K562 (cell line): ENCODE measurements at regions of chr1 and their contacts with region 1.

Region 1: DNA sequence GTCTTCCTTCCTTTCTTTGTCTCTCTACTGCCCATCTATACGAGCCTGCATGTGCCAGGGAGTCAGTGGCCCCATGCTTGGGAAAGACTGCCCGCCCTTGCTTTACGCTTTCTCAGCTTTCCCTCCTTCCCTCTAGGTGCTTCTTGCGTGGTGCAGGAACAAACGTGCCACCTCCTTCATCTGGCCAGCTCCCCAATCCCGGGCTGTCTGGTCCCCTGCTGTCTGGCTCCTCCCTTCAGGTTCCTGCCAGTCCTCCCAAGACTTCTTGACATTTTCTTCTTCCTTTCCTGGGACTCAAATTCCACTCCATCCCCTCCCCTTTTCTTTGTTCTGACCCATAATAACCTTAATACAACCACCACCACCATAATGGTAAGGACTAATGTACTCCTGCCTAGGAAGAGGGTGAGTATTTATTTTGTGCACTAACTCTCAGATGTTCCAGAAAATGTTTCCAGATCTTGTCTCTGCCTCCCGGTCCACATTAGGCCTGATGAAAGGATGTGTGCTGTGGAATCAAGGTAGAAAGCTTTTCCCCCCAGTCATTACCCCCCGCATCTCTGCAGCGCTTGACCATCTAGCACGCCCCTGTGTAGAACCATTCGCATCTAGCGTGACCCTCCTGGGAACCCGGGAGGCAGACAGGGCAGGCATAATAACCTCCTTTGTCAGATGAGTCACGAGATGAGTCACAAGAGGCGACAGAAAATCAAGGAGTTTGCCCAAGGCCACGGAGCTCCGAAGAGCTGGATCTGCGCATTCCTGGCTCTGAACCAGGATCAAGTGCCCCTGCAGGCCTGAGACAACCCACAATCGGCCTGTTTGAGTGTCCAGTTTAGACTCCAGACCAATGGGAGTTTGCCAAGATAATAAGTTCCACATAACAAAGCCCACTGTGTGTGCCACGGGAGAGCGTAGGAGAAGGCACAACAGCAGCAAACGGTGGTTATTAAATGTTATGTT is 60.1 kb upstream of the NEK2 start:
- DNase-seq: peak; percentile 64 to 72 (median 66)
- ATAC-seq: peak; percentile 70
- H3K4me3 ChIP-seq: no peak overlapping the region
- H3K27ac ChIP-seq: no peak overlapping the region
- H3K4me1 ChIP-seq: peaks cover 15 to 31% of the 10 kb centered on the region in 2 experiments
- H3K27me3 ChIP-seq: no peaks in the 10 kb centered on the region
- CTCF ChIP-seq: no peak
- EP300 ChIP-seq: no peak
- POLR2A ChIP-seq: no peak
- RAD21 ChIP-seq: no peak

Region 2: DNA sequence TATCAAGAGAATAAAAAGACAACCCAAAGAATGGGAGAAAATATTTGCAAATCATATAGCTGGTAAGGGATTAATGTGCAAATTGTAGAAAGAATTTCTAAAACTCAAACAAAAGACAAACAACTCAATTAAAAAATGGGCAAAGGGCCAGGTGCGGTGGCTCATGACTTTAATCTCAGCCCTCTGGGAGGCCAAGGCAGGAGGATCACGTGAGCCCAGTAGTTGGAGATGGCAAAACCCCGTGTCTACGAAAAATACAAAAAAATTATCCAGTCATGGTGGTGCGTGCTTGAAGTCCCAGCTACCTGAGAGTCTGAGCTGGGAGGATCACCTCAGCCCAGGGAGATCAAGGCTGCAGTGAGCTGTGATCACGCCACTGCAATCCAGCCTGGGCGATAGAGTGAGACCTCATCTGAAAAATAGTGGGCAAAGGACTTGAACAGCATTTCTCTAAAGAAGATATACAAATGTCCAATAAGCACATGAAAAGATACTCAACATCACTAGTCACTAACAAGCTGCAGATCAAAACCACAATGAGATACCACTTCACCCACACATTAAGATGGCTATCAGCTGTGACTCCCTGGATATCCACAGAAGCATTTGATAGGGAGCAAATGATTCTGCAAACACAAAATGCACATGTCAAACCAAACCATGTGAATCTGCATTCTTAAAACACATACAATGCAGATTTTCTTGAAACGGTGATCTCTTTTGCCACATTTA is 177.4 kb before region 1 on chr1:
- CTCF ChIA-PET with region 1: no interaction called
- POLR2A ChIA-PET with region 1: no interaction called
- in situ Hi-C with region 1: no loop called
- intact Hi-C with region 1: no loop called
- DNase-seq: peak in 1 of 4 experiments; percentile 51
- ATAC-seq: peak; percentile 11; the same call in 1 of the 3 replicates
- H3K4me3 ChIP-seq: no peak overlapping the region
- H3K27ac ChIP-seq: no peak overlapping the region
- H3K4me1 ChIP-seq: peaks cover 20 to 29% of the 10 kb centered on the region in 2 experiments
- H3K27me3 ChIP-seq: no peaks in the 10 kb centered on the region; a peak in 1 of 5 replicates
- CTCF ChIP-seq: no peak
- EP300 ChIP-seq: no peak
- POLR2A ChIP-seq: no peak
- RAD21 ChIP-seq: no peak

Region 3: DNA sequence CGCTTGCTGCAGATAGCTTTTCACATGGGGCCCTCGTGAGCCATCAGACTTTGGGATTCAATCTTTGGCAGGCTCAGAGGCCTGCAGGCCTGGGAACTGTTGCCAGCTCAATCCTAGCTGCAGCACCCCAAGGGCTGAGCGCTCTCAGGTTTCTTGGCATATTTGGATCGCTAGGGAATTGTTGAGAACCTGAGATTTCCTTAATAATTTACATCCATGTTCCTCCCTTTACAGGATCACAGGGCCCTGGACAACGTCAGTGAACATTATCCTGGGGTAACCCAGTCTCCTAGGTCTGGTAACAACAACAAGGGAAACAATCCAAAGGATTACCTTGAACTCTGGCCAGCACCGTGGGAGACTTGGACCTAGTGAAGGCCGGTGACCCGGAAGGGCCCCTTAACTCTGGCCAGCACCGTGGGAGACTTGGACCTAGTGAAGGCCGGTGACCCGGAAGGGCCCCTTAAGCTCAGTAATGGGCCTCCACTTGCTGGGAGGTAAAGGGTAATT is 10.7 kb before region 1 on chr1:
- CTCF ChIA-PET with region 1: no interaction called
- POLR2A ChIA-PET with region 1: interaction called, 35 read pairs
- in situ Hi-C with region 1: no loop called
- intact Hi-C with region 1: no loop called
- DNase-seq: no peak
- ATAC-seq: no peak
- H3K4me3 ChIP-seq: no peak overlapping the region
- H3K27ac ChIP-seq: no peak overlapping the region
- H3K4me1 ChIP-seq: peaks cover 15 to 23% of the 10 kb centered on the region in 2 experiments; a peak in 4 of 5 replicates
- H3K27me3 ChIP-seq: no peaks in the 10 kb centered on the region
- CTCF ChIP-seq: no peak
- EP300 ChIP-seq: no peak
- POLR2A ChIP-seq: no peak
- RAD21 ChIP-seq: no peak